ENCODE measurements at regions of chr1 and their contacts with region 1.

Region 1: DNA sequence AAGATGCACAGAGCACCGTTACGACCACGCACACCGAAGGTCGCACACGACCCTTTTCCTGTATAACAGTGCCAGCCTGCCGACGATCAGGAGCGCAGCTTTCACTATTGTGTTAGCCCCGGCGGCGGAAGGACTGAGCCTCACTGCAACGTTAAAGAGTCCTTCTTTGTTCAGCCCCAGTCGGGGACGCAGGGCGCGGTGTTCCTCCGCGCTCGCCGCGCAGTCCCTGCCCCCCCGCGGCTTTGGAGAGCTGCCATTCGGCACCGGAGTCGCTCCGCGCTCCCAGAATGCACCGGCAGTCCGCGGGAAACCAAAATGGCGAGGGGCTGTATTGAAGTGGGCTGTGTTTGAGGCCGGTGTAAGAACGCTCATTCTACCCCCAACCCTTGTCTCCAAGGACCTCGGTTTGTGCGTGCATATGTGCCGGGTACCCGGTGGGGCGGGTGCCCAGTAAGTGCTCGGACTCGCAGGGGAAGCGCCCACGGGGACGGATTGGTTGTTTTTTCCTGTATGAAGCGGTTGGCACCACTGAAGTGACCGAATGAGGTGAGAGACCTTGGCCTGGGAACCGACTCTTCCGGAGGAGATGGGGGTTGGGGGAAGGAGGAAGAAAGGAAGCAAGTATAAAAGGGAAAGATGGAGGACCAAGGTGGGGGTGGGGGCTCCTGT is at the start of gene MTF2:
- DNase-seq: peak; percentile 98
- H3K4me3 Mint-ChIP-seq: peak within 1 kb of the TSS; percentile 99
- H3K27ac Mint-ChIP-seq: peak within 1 kb of the TSS; percentile 94
- H3K4me1 Mint-ChIP-seq: peaks cover 35% of the 10 kb centered on the region
- H3K27me3 Mint-ChIP-seq: no peaks in the 10 kb centered on the region
- total RNA-seq, gene MTF2: 63.7 and 64.3 TPM in 2 replicates

Region 2: DNA sequence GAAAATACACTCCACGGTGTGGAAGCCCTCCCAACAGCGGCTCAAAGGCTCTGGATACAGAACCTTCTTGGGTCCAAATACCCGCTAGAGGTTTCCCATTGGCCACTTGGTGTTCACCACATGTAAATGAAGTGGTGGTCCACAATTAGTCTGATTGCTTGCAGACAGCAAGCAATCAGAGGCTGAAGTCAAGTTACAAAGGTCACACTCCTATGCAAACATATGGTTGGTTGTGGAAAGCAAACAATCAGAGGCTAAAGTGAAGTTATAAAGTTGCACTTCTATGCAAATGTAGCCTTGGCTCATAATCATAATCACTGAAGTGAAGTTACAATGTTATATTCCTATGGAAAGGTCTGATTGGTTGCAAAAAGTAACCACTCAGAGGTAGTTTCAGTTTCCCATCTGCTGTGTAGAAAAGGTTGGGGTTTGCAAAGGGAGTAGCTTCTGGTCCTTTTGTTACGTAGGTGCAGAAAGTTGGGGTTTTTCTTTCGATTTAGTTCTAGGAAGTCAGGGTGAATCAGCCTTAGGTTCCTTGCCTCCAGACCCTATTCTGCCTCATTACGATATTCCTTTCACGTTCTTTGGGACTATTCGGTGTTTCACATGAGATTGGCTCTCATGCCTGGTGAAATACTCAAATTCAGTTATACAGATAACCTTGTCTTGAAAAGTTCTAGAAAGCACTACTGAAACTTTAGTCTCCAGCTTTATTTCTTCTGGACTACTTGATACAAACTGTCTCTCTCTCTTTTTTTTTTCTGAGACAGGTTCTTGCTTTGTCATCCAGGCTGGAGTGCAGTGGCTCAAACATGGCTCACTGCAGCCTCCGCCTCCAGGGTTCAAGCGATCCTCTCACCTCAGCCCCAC is 36.7 kb before region 1 on chr1:
- intact Hi-C with region 1: loop called (anchors 1 kb)
- DNase-seq: peak; percentile 88
- H3K4me3 Mint-ChIP-seq: peak overlapping the region; percentile 83
- H3K27ac Mint-ChIP-seq: peak overlapping the region; percentile 88
- H3K4me1 Mint-ChIP-seq: peaks cover 27% of the 10 kb centered on the region
- H3K27me3 Mint-ChIP-seq: no peaks in the 10 kb centered on the region

Region 3: GRCh38 chr1:93137604-93138292 is 58.6 kb after region 1 on chr1:
- intact Hi-C with region 1: loop called (anchors 5 kb)
- DNase-seq: no peak
- H3K4me3 Mint-ChIP-seq: no peak overlapping the region
- H3K27ac Mint-ChIP-seq: no peak overlapping the region
- H3K4me1 Mint-ChIP-seq: peaks cover 5% of the 10 kb centered on the region
- H3K27me3 Mint-ChIP-seq: no peaks in the 10 kb centered on the region

Measured in activated CD4-positive, alpha-beta T cell treated with anti-CD3 and anti-CD28 coated beads, Interleukin-2, amount 10 ng/mL, durations not matched to agents 24 days and 14 days (primary cell).